Motor neuron (in vitro differentiated cells): ENCODE measurements at regions of chr10 and their contacts with region 1.

Region 1: DNA sequence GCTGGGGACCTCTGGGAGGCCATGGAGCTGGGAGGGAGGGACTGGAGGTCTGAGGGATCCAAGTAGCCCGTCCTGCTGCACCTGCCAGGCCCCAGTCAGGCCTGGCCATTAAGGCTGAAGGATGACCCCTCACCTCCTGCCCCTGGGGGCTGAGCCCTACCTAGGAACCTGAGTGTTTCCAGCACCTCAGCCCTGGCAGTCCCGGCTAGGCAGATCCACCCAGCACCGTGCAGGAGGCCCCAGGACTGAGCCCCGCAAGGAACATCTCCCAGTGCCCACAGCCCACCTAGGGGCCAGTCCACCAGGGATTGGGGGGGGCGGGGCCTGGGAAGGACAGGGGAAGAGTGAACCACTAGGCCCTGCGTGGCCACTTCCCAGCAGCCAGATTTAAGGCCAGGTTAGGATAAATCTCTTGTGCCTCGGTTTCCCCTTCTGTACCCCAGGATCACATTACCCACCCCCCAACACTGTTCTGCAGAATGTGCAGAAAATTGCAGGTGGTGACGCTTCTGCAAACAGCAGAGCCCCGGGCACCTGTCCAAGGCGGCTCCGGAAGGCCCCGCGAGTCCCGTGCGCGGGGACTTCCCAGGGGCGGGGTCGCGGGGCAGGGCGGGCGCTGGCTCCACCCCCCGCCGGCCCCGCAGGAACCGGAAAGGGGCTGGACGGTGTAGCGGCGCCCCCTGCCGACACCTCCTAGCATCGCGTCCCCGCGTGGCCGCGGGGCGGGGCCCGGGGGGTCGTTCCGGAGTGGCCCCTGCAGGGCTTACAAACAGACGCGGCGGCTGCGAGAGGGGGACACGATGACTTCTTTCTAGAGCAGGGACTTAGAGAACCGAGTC is 55.9 kb downstream of the PWWP2B start:
- ATAC-seq: peak; percentile 61 to 85 (median 79)
- H3K4me3 ChIP-seq: peak overlapping the region in 1 of 5 donors; percentile 6
- H3K27ac ChIP-seq: no peak overlapping the region
- H3K4me1 ChIP-seq: peaks cover 5 to 34% of the 10 kb centered on the region in 2 donors

Region 2: DNA sequence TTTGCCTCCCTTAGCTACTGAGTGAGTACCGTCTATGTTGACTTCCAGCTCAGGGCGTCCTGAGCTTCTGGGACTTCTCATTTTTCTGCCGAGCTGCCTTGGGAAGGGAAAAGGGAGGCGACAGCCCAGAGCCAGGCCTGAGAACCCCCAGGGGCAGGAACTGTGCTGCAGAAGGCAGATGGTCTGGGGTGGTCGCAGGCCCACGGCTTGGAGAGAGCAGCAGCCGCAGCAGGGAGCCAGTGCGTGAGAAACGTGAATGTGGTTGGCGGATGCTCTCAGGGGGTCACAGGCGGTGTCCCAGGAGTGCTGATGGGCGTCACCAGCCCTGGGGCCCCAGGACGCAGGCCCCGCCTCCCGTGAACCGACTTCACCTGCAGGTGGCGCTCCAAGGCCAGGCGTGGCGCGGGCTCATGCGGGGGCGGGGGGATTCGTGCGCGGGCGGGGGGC is 65.1 kb before region 1 on chr10:
- in situ Hi-C with region 1: loop called in 2 of 9 experiments (anchors 10 kb)
- ATAC-seq: peak; percentile 62 to 91 (median 85)
- H3K4me3 ChIP-seq: no peak overlapping the region
- H3K27ac ChIP-seq: peak overlapping the region; percentile 20 to 76
- H3K4me1 ChIP-seq: peaks cover 12 to 20% of the 10 kb centered on the region in 2 donors

Region 3: GRCh38 chr10:133173860-133174640 is 721.2 kb after region 1 on chr10:
- in situ Hi-C with region 1: no loop called
- ATAC-seq: no peak
- H3K4me3 ChIP-seq: no peak overlapping the region
- H3K27ac ChIP-seq: no peak overlapping the region
- H3K4me1 ChIP-seq: no peaks in the 10 kb centered on the region